ENCODE measurements at regions of chr7 and their contacts with region 1.

Region 1: GRCh38 chr7:131188367-131189339 is 139.0 kb upstream of the MKLN1 start:
- DNase-seq: no peak
- ATAC-seq: peak; percentile 87
- H3K4me3 Mint-ChIP-seq: no peak overlapping the region
- H3K27ac Mint-ChIP-seq: peak overlapping the region; percentile 66
- H3K4me1 Mint-ChIP-seq: peaks cover 12% of the 10 kb centered on the region
- H3K27me3 Mint-ChIP-seq: peaks cover 2% of the 10 kb centered on the region
- CTCF ChIP-seq: no peak

Region 2: GRCh38 chr7:131011976-131012375 is 176.7 kb before region 1 on chr7:
- CTCF ChIA-PET with region 1: no interaction called
- POLR2A ChIA-PET with region 1: no interaction called
- intact Hi-C with region 1: no loop called
- DNase-seq: no peak
- ATAC-seq: no peak
- H3K4me3 Mint-ChIP-seq: no peak overlapping the region
- H3K27ac Mint-ChIP-seq: peak overlapping the region; percentile 89
- H3K4me1 Mint-ChIP-seq: peaks cover 86% of the 10 kb centered on the region
- H3K27me3 Mint-ChIP-seq: no peaks in the 10 kb centered on the region
- CTCF ChIP-seq: no peak

Region 3: GRCh38 chr7:131124001-131124629 is 64.5 kb before region 1 on chr7:
- CTCF ChIA-PET with region 1: no interaction called
- POLR2A ChIA-PET with region 1: no interaction called
- intact Hi-C with region 1: loop called (anchors 5 kb)
- DNase-seq: no peak
- ATAC-seq: peak; percentile 86
- H3K4me3 Mint-ChIP-seq: peak overlapping the region; percentile 52
- H3K27ac Mint-ChIP-seq: peak overlapping the region; percentile 85
- H3K4me1 Mint-ChIP-seq: peaks cover 40% of the 10 kb centered on the region
- H3K27me3 Mint-ChIP-seq: no peaks in the 10 kb centered on the region
- CTCF ChIP-seq: no peak

Region 4: DNA sequence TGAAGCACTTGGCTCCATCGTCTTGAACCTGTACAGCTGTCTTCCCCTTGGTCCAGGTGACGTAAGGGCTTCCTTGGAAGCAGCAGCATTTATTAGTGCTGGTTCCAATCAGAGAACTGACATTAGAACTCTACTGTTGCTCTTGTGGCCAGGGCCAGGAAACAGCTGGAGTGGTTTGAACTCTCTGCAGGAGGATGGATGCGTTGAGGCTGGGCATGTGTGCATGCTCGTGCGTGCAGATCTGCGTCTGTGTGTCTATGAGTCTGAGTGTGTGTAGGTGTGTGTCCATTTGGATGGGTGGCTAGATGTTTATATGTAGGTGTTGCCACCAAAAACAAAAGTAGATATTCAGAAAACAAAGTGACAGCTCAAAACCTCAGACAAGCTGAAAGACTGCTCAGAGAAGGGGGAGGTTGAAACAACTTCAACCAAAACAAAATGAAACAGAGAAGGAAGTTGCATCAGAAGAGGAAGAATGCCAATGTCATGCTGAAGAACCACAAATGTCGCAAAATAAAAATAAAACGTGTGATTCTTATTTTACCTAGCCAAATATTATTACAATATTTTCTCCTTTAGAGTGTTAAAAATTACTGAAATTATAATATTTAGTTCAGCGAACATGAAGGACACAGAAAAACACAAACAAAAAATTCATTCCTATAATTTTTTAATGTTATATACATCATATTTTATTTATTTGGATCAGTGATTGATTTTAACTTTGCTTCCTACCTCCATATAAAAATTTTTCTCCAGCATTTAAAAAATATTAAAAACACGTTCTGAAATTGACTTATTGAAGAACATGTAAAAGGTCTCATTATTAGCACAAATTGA is 42.9 kb after region 1 on chr7:
- CTCF ChIA-PET with region 1: no interaction called
- POLR2A ChIA-PET with region 1: interaction called, 4 read pairs
- intact Hi-C with region 1: loop called (anchors 5 kb)
- DNase-seq: peak; percentile 31
- ATAC-seq: peak; percentile 73
- H3K4me3 Mint-ChIP-seq: peak overlapping the region; percentile 82
- H3K27ac Mint-ChIP-seq: peak overlapping the region; percentile 97
- H3K4me1 Mint-ChIP-seq: peaks cover 29% of the 10 kb centered on the region
- H3K27me3 Mint-ChIP-seq: no peaks in the 10 kb centered on the region
- CTCF ChIP-seq: no peak

Measured in activated B cell treated with CpG ODN at 0.5 μM for 24 hours (primary cell).